PC-9 (cell line): ENCODE measurements at regions of chr4 and their contacts with region 1.

Region 1: DNA sequence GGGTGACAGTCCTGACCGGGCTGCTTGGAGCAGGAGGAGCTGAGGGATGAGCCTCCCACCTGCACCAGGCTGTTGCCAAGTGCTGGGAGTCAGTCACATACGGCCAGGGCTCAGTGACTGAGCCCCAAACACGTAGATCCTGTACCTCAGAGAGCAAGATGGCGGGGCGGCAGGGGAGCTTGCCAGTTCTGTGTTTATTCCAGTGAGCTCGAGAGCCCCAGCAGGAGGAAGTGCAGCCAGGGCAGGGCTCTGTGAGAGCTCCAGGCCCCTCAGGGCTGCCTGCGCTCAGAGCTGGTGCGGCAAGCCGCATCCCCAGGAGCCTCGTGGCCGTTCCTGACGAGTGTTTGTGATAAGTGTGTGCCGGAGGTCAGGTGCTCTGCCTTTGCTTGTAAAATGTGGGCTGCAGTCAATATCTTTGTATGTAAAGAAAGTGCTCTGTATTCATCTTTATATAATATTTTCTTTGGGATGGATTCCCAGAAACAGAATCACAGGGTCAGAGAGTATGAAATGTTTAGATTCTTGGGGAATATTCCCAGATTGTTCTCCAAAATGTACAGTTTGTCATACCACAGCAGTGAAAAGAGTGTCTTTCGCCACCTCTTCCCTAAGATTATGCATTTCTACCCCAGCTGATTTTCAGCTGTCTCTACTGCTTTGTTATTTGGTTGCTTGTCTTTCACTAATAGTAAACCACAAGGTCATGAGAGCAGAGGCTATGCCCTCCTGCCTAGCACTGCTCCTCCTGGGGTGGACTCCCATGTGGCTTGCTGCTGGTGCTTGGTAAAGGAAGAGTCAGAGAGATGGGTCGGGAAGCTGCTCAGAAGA is 50.3 kb downstream of the NELFA start:
- DNase-seq: no peak
- H3K4me3 ChIP-seq: no peak overlapping the region
- H3K27ac ChIP-seq: no peak overlapping the region
- H3K4me1 ChIP-seq: no peaks in the 10 kb centered on the region
- H3K27me3 ChIP-seq: no peaks in the 10 kb centered on the region
- CTCF ChIP-seq: no peak

Region 2: GRCh38 chr4:2071912-2072867 is 113.7 kb after region 1 on chr4:
- CTCF ChIA-PET with region 1: interaction called, 10 read pairs
- POLR2A ChIA-PET with region 1: no interaction called
- intact Hi-C with region 1: no loop called
- DNase-seq: no peak
- H3K4me3 ChIP-seq: no peak overlapping the region
- H3K27ac ChIP-seq: no peak overlapping the region
- H3K4me1 ChIP-seq: no peaks in the 10 kb centered on the region
- H3K27me3 ChIP-seq: no peaks in the 10 kb centered on the region
- CTCF ChIP-seq: no peak

Region 3: GRCh38 chr4:2630556-2631273 is 672.2 kb after region 1 on chr4:
- CTCF ChIA-PET with region 1: no interaction called
- POLR2A ChIA-PET with region 1: interaction called, 10 read pairs
- intact Hi-C with region 1: no loop called
- DNase-seq: no peak
- H3K4me3 ChIP-seq: no peak overlapping the region
- H3K27ac ChIP-seq: no peak overlapping the region
- H3K4me1 ChIP-seq: no peaks in the 10 kb centered on the region
- H3K27me3 ChIP-seq: no peaks in the 10 kb centered on the region
- CTCF ChIP-seq: no peak